MCF 10A (cell line): ENCODE measurements at regions of chr19 and their contacts with region 1.

Region 1: GRCh38 chr19:36378625-36379509 is at the start of gene ZFP14:
- DNase-seq: peak; percentile 96
- H3K4me3 Mint-ChIP-seq: peak within 1 kb of the TSS; percentile 94
- H3K27ac Mint-ChIP-seq: peak within 1 kb of the TSS; percentile 82
- H3K4me1 Mint-ChIP-seq: peaks cover 8% of the 10 kb centered on the region
- H3K27me3 Mint-ChIP-seq: no peaks in the 10 kb centered on the region
- CTCF ChIP-seq: peak; percentile 30
- total RNA-seq, gene ZFP14: 1.5 and 1.7 TPM in 2 replicates

Region 2: GRCh38 chr19:36331353-36332228 is 47.3 kb before region 1 on chr19:
- CTCF ChIA-PET with region 1: no interaction called
- POLR2A ChIA-PET with region 1: interaction called, 5 read pairs
- intact Hi-C with region 1: loop called (anchors 2 kb)
- DNase-seq: peak; percentile 89
- H3K4me3 Mint-ChIP-seq: peak overlapping the region; percentile 69
- H3K27ac Mint-ChIP-seq: peak overlapping the region; percentile 74
- H3K4me1 Mint-ChIP-seq: no peaks in the 10 kb centered on the region
- H3K27me3 Mint-ChIP-seq: no peaks in the 10 kb centered on the region
- CTCF ChIP-seq: no peak

Region 3: GRCh38 chr19:36489118-36489919 is 110.5 kb after region 1 on chr19 and contains the start of gene ZNF566:
- CTCF ChIA-PET with region 1: interaction called, 5 read pairs
- POLR2A ChIA-PET with region 1: interaction called, 36 read pairs
- intact Hi-C with region 1: loop called (anchors 5 kb)
- DNase-seq: peak; percentile 96
- H3K4me3 Mint-ChIP-seq: peak within 1 kb of the TSS; percentile 98
- H3K27ac Mint-ChIP-seq: peak within 1 kb of the TSS; percentile 99
- H3K4me1 Mint-ChIP-seq: peaks cover 6% of the 10 kb centered on the region
- H3K27me3 Mint-ChIP-seq: no peaks in the 10 kb centered on the region
- CTCF ChIP-seq: no peak
- total RNA-seq, gene ZNF566: 3.9 and 6.6 TPM in 2 replicates

Region 4: DNA sequence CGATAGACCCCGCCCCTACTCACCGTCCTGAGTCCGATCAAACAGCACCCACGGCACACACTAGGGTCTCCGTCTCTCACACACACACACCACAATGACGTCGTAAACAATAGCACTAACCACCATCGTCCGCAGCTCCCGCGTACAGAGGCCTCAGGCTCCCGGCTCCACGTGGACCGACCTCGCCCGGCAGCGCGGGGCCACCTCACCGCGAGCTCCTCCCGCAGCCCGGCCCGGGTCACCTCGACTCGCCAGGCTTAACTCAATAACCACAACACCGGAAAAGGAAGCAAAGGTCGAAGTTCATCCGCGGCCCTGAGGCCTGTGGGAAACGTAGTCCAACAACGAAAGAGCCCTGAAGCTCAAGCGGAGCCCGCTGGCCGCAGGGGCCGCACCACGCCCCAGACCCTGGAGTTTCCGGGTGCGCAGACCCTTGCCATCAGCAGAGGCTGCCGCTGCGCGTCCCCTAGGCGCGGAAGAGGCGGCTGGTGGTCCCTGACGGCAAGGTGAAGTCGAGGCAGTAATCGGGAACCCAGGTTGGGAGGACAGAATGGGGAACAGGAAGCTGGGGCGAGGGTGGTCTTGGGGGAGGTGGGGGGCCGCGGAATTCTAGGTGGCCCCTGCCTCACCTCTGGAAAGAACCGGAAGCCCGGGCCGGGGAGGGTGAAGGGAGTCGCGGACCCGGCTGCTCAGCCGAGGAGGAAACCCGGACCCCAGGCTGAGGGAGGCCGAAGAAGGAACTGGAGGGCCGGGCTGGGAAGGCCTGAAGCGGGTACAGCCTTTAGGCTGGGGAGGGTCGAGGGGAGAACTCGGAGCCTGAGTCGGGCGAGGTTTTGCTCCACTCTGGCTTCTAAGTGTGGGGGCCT is 194.4 kb after region 1 on chr19 and contains the start of gene ZNF529:
- CTCF ChIA-PET with region 1: no interaction called
- POLR2A ChIA-PET with region 1: interaction called, 15 read pairs
- intact Hi-C with region 1: loop called (anchors 2 kb)
- DNase-seq: peak; percentile 93
- H3K4me3 Mint-ChIP-seq: peak within 1 kb of the TSS; percentile 93
- H3K27ac Mint-ChIP-seq: peak within 1 kb of the TSS; percentile 99
- H3K4me1 Mint-ChIP-seq: peaks cover 26% of the 10 kb centered on the region
- H3K27me3 Mint-ChIP-seq: no peaks in the 10 kb centered on the region
- CTCF ChIP-seq: no peak
- total RNA-seq, gene ZNF529: 11.4 and 12.8 TPM in 2 replicates

Region 5: GRCh38 chr19:37217855-37218591 is 839.2 kb after region 1 on chr19 and contains the start of gene ZNF383:
- CTCF ChIA-PET with region 1: no interaction called
- POLR2A ChIA-PET with region 1: interaction called, 5 read pairs
- intact Hi-C with region 1: loop called (anchors 10 kb)
- DNase-seq: peak; percentile 92
- H3K4me3 Mint-ChIP-seq: peak within 1 kb of the TSS; percentile 89
- H3K27ac Mint-ChIP-seq: peak within 1 kb of the TSS; percentile 90
- H3K4me1 Mint-ChIP-seq: peaks cover 21% of the 10 kb centered on the region
- H3K27me3 Mint-ChIP-seq: no peaks in the 10 kb centered on the region
- CTCF ChIP-seq: no peak
- total RNA-seq, gene ZNF383: 7.4 and 9.2 TPM in 2 replicates